ENCODE measurements at regions of chr18 and their contacts with region 1.

Region 1: GRCh38 chr18:70296289-70296688 is 7.4 kb downstream of the SOCS6 start:
- DNase-seq: no peak
- ATAC-seq: peak; percentile 70

Region 2: DNA sequence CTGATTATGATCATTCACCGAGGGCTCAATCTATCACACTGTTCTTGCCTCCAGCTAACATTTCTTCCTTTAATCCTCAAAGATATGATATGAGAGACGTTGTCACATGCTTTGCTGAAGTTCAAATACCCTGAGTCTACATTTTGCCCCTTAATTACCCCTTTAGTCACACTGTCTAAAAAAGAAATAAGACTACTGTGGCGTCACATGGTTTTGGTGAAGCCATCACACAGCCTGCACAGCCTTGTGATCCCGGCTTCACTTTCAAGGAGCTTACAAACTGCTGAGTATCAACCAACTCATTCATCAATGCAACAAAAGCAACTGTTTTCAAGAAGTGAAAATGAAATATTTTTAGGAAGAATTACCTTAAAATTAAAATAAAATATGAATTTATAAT is 39.3 kb before region 1 on chr18:
- intact Hi-C with region 1: no loop called
- DNase-seq: no peak
- ATAC-seq: no peak

Region 3: GRCh38 chr18:70337139-70337972 is 41.1 kb after region 1 on chr18:
- intact Hi-C with region 1: loop called (anchors 5 kb)
- DNase-seq: no peak
- ATAC-seq: peak; percentile 81

Region 4: DNA sequence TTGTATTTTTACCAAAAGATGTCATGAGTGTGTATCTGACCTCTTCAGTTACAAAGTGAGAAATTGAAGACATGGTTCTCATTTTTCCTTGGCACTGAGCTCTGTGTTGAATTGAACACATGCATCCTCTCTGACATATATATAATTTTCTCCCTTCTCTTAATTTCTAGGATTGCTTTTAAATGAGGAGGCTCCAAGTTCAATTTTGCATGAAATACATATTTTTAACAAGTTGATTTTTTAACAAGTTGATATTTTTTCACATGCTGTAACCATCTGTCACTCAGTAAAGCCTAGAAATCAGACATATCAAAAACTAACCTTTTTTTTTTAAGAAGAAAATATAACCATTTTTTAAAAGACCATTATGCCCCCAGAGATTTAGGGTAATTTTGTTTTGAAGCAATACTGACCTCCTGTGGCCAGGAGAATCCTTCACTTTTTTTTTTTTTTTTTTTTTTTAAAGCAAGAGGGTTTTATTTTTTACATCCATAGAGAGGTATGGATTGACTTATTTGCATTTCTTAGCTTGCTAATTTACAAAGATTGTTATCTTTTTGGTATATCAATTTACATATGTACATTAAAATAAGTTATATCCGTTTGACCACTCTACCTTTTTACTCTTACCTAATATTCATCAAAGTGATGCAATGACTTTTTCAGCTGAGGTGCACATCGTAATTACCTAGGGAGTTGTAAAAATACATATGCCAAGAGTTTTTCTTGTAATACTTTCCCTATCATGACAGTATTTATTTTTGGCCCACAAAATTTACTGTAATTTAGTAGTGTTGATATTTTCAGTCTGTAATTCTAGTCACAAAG is 154.4 kb after region 1 on chr18:
- intact Hi-C with region 1: no loop called
- DNase-seq: no peak
- ATAC-seq: no peak

Measured in Right ventricle myocardium inferior (tissue), 1 donor.